ENCODE measurements at regions of chr5 and their contacts with region 1.

Region 1: GRCh38 chr5:77491783-77492652 is at the start of gene WDR41:
- DNase-seq: peak; percentile 96
- H3K4me3 Mint-ChIP-seq: peak within 1 kb of the TSS; percentile 83
- H3K27ac Mint-ChIP-seq: peak within 1 kb of the TSS; percentile 92
- H3K4me1 Mint-ChIP-seq: peaks cover 23% of the 10 kb centered on the region
- H3K27me3 Mint-ChIP-seq: peaks cover 16% of the 10 kb centered on the region
- total RNA-seq, gene WDR41: 30.9 and 32.6 TPM in 2 replicates

Region 2: GRCh38 chr5:77076961-77077823 is 414.8 kb before region 1 on chr5:
- intact Hi-C with region 1: loop called (anchors 5 kb)
- DNase-seq: peak; percentile 89
- H3K4me3 Mint-ChIP-seq: peak overlapping the region; percentile 66
- H3K27ac Mint-ChIP-seq: no peak overlapping the region
- H3K4me1 Mint-ChIP-seq: peaks cover 4% of the 10 kb centered on the region
- H3K27me3 Mint-ChIP-seq: no peaks in the 10 kb centered on the region

Region 3: GRCh38 chr5:77224712-77225355 is 267.2 kb before region 1 on chr5:
- intact Hi-C with region 1: loop called (anchors 5 kb)
- DNase-seq: no peak
- H3K4me3 Mint-ChIP-seq: no peak overlapping the region
- H3K27ac Mint-ChIP-seq: no peak overlapping the region
- H3K4me1 Mint-ChIP-seq: no peaks in the 10 kb centered on the region
- H3K27me3 Mint-ChIP-seq: peaks cover 30% of the 10 kb centered on the region

Region 4: GRCh38 chr5:77379558-77380061 is 112.4 kb before region 1 on chr5:
- intact Hi-C with region 1: loop called (anchors 1 kb)
- DNase-seq: peak; percentile 81
- H3K4me3 Mint-ChIP-seq: peak overlapping the region; percentile 51
- H3K27ac Mint-ChIP-seq: peak overlapping the region; percentile 82
- H3K4me1 Mint-ChIP-seq: peaks cover 29% of the 10 kb centered on the region
- H3K27me3 Mint-ChIP-seq: no peaks in the 10 kb centered on the region

Region 5: DNA sequence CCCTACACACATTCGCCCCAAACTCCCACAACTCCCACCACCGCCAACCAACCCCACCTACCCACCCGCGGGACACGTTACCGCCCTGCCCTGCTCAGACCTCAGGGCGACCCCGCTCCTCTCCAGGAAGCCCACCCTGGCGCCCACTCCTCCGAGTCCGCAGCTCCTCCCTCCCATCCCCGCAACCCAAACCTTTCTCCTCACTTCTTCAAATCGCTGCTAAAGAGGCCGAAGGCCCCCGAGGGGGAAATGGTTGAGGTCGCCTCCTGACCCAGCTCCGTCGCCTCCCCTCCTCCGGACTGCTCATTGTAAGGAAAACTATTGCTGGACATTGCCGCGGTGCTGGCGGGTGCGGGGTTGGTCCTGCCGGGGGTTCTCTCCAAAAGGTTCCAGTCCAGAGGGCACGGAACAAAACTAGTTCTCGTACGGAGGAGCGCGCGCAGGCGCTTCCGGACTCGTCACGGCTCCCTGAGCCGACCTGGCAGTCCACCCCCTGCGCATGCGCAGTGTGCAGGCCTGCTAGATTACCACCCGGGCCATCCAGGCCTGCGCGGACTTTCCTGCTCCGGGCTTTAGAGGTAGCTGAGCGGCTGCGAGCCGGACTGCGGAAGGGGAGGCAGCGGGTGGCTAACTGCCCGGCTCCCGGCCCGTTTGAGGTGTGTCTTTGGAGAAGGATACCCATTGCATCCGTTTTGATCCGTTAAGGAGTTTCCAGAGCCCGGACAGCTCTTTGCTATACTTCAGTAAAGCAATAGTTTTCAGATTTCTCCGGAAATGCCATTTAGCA is 802.4 kb after region 1 on chr5 and contains the start of gene AP3B1:
- intact Hi-C with region 1: loop called (anchors 10 kb)
- DNase-seq: peak; percentile 99
- H3K4me3 Mint-ChIP-seq: peak within 1 kb of the TSS; percentile 88
- H3K27ac Mint-ChIP-seq: peak within 1 kb of the TSS; percentile 97
- H3K4me1 Mint-ChIP-seq: peaks cover 26% of the 10 kb centered on the region
- H3K27me3 Mint-ChIP-seq: peaks cover 10% of the 10 kb centered on the region
- total RNA-seq, gene AP3B1: 40.1 and 45.5 TPM in 2 replicates